Activated naive CD4-positive, alpha-beta T cell treated with anti-CD3 and anti-CD28 coated beads for 36 hours (primary cell): ENCODE measurements at regions of chrX and their contacts with region 1.

Region 1: GRCh38 chrX:49269010-49269767 is 404 bp upstream of the PPP1R3F start:
- DNase-seq: peak; percentile 97
- H3K4me3 Mint-ChIP-seq: peak overlapping the region; percentile 85
- H3K27ac Mint-ChIP-seq: peak overlapping the region; percentile 98
- H3K4me1 Mint-ChIP-seq: peaks cover 48% of the 10 kb centered on the region
- H3K27me3 Mint-ChIP-seq: no peaks in the 10 kb centered on the region

Region 2: DNA sequence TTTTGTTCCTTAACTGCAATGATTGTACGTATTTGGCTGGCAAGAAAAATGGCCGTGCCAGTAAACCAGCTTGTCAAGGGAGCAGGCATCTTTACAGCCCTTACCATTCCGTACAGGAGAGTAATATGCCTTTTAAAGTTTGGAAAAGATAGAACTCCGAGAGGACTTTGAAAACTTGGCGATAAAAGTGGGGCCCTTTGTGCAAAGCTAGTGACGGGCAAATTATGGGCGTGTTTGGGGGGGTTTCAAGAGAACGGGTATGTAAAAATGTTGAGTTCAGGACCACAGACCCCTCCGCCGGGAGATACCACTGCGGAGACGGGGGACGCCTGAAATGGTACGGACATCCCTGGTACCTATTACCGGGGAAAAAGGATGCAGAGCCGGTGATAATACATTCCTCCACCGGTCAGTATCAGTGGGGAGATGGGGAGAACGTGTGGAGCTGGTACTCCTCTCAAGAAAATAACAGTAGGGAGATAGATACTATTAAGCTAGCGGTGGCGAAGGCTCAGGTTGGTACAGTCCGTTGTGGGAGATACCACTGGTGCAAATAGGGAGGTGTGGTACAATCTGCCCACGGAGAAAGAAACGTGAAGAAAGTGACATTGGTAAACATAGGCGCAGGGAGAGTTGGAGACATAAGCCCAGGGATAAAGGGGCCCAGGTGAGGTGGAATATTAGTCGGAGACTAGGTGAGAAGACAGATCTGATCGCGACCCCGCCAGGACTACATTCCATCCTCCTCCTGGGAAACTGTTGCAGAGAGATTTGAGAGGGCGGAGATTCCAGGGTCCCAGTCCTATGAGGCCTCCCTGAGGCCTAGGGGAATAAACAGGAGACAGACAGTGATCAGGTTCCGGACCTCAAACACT is 1247.9 kb before region 1 on chrX:
- CTCF ChIA-PET with region 1: no interaction called
- intact Hi-C with region 1: no loop called
- DNase-seq: peak; percentile 82
- H3K4me3 Mint-ChIP-seq: peak overlapping the region; percentile 84
- H3K27ac Mint-ChIP-seq: peak overlapping the region; percentile 95
- H3K4me1 Mint-ChIP-seq: peaks cover 10% of the 10 kb centered on the region
- H3K27me3 Mint-ChIP-seq: no peaks in the 10 kb centered on the region

Region 3: DNA sequence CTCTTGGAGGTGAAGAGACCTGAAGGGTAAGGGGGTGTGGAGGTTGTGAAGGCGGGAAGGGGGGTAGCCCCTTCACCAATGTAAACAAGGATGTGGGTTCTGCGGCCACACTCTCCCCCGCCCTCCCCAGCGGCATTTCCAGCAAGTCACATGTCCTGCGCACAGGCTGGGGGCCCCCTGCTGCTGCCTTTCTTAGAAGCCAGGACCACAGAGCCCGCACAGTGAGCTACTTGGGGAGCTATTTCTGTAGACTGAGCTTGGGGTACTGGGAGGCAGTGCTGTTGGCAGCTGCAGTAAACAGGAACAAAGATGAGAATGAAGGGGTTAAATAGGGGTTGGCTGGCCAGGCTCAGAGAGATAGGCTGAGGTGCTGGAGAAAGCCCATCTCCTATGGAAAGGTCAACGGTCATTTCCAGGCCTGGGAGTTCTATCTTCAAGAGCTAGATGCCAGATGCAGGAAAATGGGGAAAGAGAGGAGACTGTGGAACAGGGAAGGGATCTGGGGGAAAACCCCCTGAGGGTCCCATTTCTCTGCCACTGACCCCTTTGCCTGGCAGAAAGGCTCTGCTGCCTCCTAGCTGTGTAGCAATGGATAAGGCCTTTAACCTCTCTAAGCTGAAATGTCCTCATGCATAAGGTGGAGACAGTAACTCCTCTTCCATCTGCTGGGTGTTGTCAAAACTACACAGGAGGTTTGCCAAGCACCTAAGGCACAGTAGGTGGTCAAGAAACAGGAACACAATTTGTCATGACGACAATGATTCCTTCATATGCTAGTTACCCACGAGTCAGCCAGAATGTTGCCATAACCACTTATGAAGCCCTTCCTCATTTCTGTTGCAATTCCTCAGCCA is 331.9 kb before region 1 on chrX:
- CTCF ChIA-PET with region 1: no interaction called
- intact Hi-C with region 1: loop called (anchors 10 kb)
- DNase-seq: peak; percentile 95
- H3K4me3 Mint-ChIP-seq: peak overlapping the region; percentile 75
- H3K27ac Mint-ChIP-seq: peak overlapping the region; percentile 100
- H3K4me1 Mint-ChIP-seq: peaks cover 81% of the 10 kb centered on the region
- H3K27me3 Mint-ChIP-seq: no peaks in the 10 kb centered on the region

Region 4: GRCh38 chrX:48972220-48973167 is 296.7 kb before region 1 on chrX:
- CTCF ChIA-PET with region 1: no interaction called
- intact Hi-C with region 1: no loop called
- DNase-seq: peak; percentile 51
- H3K4me3 Mint-ChIP-seq: peak overlapping the region; percentile 42
- H3K27ac Mint-ChIP-seq: no peak overlapping the region
- H3K4me1 Mint-ChIP-seq: peaks cover 13% of the 10 kb centered on the region
- H3K27me3 Mint-ChIP-seq: no peaks in the 10 kb centered on the region

Region 5: DNA sequence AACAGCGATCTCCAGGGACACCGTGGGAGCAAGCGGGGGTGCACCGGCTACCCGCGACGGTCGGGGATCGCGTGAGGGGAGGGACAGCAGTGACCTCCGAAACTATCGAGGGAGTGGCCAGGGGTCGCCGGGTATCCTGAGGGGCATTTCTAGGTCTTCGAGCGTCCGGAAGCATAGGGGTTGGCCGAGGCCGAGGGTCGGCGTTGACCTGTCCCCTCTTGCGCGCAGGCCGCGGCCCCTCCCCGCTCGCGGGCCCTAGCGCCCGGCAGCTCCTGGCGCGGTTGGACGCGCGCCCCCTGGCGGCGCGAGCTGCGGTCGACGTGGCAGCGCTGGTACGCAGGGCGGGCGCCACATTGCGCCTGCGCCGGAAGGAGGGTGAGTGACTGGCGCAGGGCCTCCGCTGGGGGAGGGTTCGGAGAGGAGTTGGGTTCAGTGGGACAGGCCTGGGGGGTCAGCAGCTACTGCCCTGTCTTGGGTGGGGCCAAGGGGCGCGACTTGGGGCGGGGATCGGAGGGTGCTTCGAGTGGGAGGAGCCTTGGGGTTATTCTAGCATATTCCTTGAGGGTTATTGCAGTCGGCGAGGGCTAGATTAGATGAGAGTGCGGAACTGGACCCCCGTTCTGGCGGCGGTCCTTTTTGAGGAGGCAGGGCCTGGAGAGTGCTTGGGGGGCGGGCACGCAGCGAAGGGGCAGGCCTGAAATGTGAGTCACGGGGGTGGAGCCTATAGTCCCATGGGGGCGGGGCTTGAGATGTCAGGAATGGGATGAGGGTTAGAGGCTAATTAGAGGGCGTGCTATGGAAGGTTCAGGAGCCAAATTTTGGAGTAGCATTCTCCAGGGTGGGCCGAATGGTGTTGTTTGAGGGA is 105.4 kb before region 1 on chrX:
- CTCF ChIA-PET with region 1: no interaction called
- intact Hi-C with region 1: loop called (anchors 1 kb)
- DNase-seq: peak; percentile 77
- H3K4me3 Mint-ChIP-seq: peak overlapping the region; percentile 76
- H3K27ac Mint-ChIP-seq: peak overlapping the region; percentile 93
- H3K4me1 Mint-ChIP-seq: peaks cover 27% of the 10 kb centered on the region
- H3K27me3 Mint-ChIP-seq: no peaks in the 10 kb centered on the region

Region 6: DNA sequence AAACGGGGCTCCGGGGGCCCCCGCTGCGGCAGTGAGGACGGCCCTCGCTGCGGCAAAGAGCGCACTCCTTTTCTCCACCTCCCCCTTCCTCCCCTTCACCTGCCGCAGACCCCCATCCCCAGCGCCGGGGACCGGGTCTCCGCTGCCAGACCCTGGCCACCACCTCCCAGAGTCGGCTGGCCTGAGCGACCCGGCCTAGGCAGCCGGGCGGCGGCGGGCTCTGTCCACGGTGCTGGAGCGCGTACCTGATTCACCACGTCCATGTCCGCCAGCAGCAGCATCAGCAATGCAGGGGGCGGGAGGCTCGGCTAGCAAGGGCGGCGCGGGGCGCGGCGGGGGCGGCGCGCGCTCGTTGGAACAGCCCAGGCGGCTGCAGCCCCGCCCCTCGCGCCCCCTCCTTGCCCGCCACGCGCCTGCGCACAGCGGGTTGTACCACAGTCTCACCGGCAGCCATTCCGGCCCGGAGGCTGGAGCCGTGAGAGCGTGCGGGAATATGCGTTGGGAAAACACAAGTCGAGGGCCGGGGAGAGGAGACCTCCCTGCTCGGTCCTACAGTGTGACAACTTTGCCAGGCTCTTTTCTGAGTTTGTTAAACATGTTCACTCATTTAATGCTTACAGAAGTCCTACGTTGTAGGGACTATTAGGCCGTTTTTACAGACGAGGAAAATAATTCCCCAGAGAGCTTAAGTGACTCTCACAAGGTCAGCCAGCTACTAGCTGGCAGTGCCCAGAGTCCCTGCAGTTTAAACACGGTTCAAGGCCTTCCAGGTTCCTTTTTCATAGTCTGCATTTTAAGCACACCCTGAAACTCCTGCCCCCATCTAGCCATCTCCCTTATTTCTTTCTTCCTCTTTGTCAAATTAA is 69.0 kb before region 1 on chrX and contains the start of gene SYP:
- CTCF ChIA-PET with region 1: no interaction called
- intact Hi-C with region 1: loop called (anchors 1 kb)
- DNase-seq: peak; percentile 91
- H3K4me3 Mint-ChIP-seq: peak within 1 kb of the TSS; percentile 64
- H3K27ac Mint-ChIP-seq: peak within 1 kb of the TSS; percentile 63
- H3K4me1 Mint-ChIP-seq: peaks cover 19% of the 10 kb centered on the region
- H3K27me3 Mint-ChIP-seq: no peaks in the 10 kb centered on the region
- total RNA-seq, gene SYP: 2.5 to 2.6 TPM

Region 7: DNA sequence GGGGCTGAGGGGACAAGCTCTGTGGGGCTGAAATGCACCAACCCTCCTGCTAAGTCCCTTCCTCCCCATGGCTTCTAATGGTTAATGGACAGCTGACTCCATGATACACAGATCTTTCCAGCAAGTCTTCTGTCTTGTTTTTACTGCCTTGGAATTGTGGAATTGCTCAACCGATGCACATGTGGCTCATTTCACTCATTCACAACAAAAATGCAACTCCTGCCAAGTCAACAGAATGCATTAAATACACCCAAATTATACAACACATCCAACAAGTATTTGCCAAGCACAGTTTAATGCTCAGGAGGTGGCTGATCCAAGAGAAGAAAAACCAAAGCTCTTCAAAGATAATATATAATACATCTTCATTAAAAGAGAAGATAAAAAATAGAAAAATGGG is 498.0 kb after region 1 on chrX:
- CTCF ChIA-PET with region 1: no interaction called
- intact Hi-C with region 1: no loop called
- DNase-seq: no peak
- H3K4me3 Mint-ChIP-seq: no peak overlapping the region
- H3K27ac Mint-ChIP-seq: no peak overlapping the region
- H3K4me1 Mint-ChIP-seq: no peaks in the 10 kb centered on the region
- H3K27me3 Mint-ChIP-seq: no peaks in the 10 kb centered on the region

Region 8: GRCh38 chrX:49922291-49923241 is 653.4 kb after region 1 on chrX and contains the start of gene CLCN5:
- CTCF ChIA-PET with region 1: no interaction called
- intact Hi-C with region 1: loop called (anchors 10 kb)
- DNase-seq: peak; percentile 95
- H3K4me3 Mint-ChIP-seq: peak within 1 kb of the TSS; percentile 73
- H3K27ac Mint-ChIP-seq: peak within 1 kb of the TSS; percentile 76
- H3K4me1 Mint-ChIP-seq: peaks cover 7% of the 10 kb centered on the region
- H3K27me3 Mint-ChIP-seq: no peaks in the 10 kb centered on the region
- total RNA-seq, gene CLCN5: 2.6 to 3.6 TPM